ENCODE measurements at regions of chr1 and their contacts with region 1.

Region 1: GRCh38 chr1:111672331-111672730 is 52.7 kb downstream of the RAP1A start:
- DNase-seq: no peak
- ATAC-seq: no peak
- H3K4me3 ChIP-seq: no peak overlapping the region
- H3K4me3 Mint-ChIP-seq: peak overlapping the region in 8 of 10 donors; percentile 7 to 53 (median 34)
- H3K27ac ChIP-seq: no peak overlapping the region
- H3K27ac Mint-ChIP-seq: peak overlapping the region in 7 of 9 donors; percentile 35 to 81 (median 75)
- H3K4me1 ChIP-seq: peaks cover 12 to 22% of the 10 kb centered on the region in 2 donors
- H3K4me1 Mint-ChIP-seq: peaks cover 43 to 81% (median 78%) of the 10 kb centered on the region in 7 donors
- H3K27me3 ChIP-seq: no peaks in the 10 kb centered on the region
- H3K27me3 Mint-ChIP-seq: no peaks in the 10 kb centered on the region

Region 2: GRCh38 chr1:111454859-111455641 is 217.3 kb before region 1 on chr1:
- CTCF ChIA-PET with region 1: no interaction called
- POLR2A ChIA-PET with region 1: no interaction called
- intact Hi-C with region 1: no loop called
- DNase-seq: no peak
- ATAC-seq: no peak
- H3K4me3 ChIP-seq: no peak overlapping the region
- H3K4me3 Mint-ChIP-seq: peak overlapping the region in 7 of 10 donors; percentile 5 to 97 (median 38)
- H3K27ac ChIP-seq: peak overlapping the region; percentile 37
- H3K27ac Mint-ChIP-seq: peak overlapping the region in 7 of 9 donors; percentile 28 to 86 (median 65)
- H3K4me1 ChIP-seq: peaks cover 40 to 46% of the 10 kb centered on the region in 2 donors
- H3K4me1 Mint-ChIP-seq: peaks cover 34 to 75% (median 70%) of the 10 kb centered on the region in 7 donors
- H3K27me3 ChIP-seq: no peaks in the 10 kb centered on the region
- H3K27me3 Mint-ChIP-seq: no peaks in the 10 kb centered on the region

Region 3: GRCh38 chr1:111656086-111657017 is 16.0 kb before region 1 on chr1:
- CTCF ChIA-PET with region 1: no interaction called
- POLR2A ChIA-PET with region 1: interaction called, 3 read pairs
- intact Hi-C with region 1: loop called in 1 of 2 experiments (anchors 1 kb)
- DNase-seq: peak in 4 of 9 donors; percentile 15 to 36 (median 20)
- ATAC-seq: no peak
- H3K4me3 ChIP-seq: no peak overlapping the region
- H3K4me3 Mint-ChIP-seq: peak overlapping the region in 6 of 10 donors; percentile 2 to 52 (median 38)
- H3K27ac ChIP-seq: no peak overlapping the region
- H3K27ac Mint-ChIP-seq: peak overlapping the region in 8 of 9 donors; percentile 9 to 84 (median 37)
- H3K4me1 ChIP-seq: peaks cover 38 to 54% of the 10 kb centered on the region in 2 donors
- H3K4me1 Mint-ChIP-seq: peaks cover 34 to 56% (median 45%) of the 10 kb centered on the region in 7 donors
- H3K27me3 ChIP-seq: no peaks in the 10 kb centered on the region
- H3K27me3 Mint-ChIP-seq: no peaks in the 10 kb centered on the region

Region 4: DNA sequence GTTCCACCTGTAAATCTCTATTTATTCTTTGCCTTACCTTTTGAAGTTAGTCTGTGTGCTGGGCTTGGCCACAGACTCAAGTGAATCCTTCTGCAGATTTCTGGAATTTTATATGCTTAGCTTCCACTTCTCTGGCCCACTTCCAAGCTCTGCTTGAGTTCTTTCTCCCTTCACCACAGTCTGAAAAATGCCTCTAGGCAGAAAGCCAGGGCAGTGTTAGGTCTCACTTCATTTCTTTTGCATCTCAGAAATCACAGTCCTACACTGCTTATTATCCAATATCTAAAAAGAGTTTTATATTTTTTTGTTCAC is 17.9 kb after region 1 on chr1:
- CTCF ChIA-PET with region 1: no interaction called
- POLR2A ChIA-PET with region 1: no interaction called
- intact Hi-C with region 1: loop called in 1 of 2 experiments (anchors 2 kb)
- DNase-seq: no peak
- ATAC-seq: no peak
- H3K4me3 ChIP-seq: no peak overlapping the region
- H3K4me3 Mint-ChIP-seq: peak overlapping the region in 5 of 10 donors; percentile 7 to 55 (median 16)
- H3K27ac ChIP-seq: peak overlapping the region; percentile 35
- H3K27ac Mint-ChIP-seq: peak overlapping the region in 8 of 9 donors; percentile 30 to 88 (median 55)
- H3K4me1 ChIP-seq: peaks cover 8 to 12% of the 10 kb centered on the region in 2 donors
- H3K4me1 Mint-ChIP-seq: peaks cover 40 to 86% (median 73%) of the 10 kb centered on the region in 7 donors
- H3K27me3 ChIP-seq: no peaks in the 10 kb centered on the region
- H3K27me3 Mint-ChIP-seq: no peaks in the 10 kb centered on the region

Region 5: GRCh38 chr1:112660072-112660471 is 987.7 kb after region 1 on chr1:
- CTCF ChIA-PET with region 1: no interaction called
- POLR2A ChIA-PET with region 1: no interaction called
- intact Hi-C with region 1: no loop called
- DNase-seq: no peak
- ATAC-seq: no peak
- H3K4me3 ChIP-seq: no peak overlapping the region
- H3K4me3 Mint-ChIP-seq: no peak overlapping the region
- H3K27ac ChIP-seq: no peak overlapping the region
- H3K27ac Mint-ChIP-seq: peak overlapping the region in 2 of 9 donors; percentile 12 to 46
- H3K4me1 ChIP-seq: no peaks in the 10 kb centered on the region
- H3K4me1 Mint-ChIP-seq: peaks cover 0 to 20% (median 6%) of the 10 kb centered on the region in 7 donors
- H3K27me3 ChIP-seq: no peaks in the 10 kb centered on the region
- H3K27me3 Mint-ChIP-seq: no peaks in the 10 kb centered on the region

Measured in naive thymus-derived CD4-positive, alpha-beta T cell (primary cell).